ENCODE measurements at regions of chr1 and their contacts with region 1.

Region 1: DNA sequence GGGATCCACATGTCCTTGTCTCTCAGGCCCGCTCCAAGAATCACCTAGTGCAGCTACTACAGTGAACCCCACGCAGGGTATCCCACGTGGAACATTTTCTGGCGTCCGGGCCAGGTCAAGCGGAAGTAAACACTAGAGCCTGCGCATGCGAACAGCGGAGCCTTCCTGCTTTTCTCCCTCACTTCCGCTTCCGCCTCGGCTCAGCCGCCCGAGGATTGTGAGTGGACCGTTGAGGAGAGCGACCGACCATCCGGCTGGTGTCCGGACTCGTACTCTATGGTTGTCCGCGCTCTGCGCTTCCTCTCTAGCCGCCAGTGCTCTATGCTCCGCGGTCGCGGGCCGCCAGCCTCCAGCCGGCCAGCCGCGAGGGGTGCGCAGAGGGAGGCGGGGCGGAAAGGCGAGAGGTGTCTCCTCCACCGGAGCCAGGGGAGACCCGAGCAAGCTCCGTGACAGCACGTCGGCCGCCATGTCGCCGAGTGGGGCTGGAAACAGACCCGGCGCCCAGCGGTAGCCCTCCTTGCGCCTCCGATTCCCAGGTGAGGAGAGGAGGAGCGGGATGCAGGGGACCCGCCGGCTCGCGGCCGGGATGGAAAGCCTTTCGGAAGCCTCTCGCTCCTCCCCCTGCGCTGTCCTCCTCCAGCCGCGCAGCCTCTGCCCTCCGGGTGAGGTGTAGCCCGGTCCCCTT is at the starts of genes CNST and TFB2M:
- DNase-seq: peak; percentile 96
- H3K4me3 Mint-ChIP-seq: peak within 1 kb of the TSS; percentile 96
- H3K27ac Mint-ChIP-seq: peak within 1 kb of the TSS; percentile 94
- H3K4me1 Mint-ChIP-seq: peaks cover 43% of the 10 kb centered on the region
- H3K27me3 Mint-ChIP-seq: no peaks in the 10 kb centered on the region
- total RNA-seq, gene CNST: 22.1 to 25.3 TPM
- total RNA-seq, gene TFB2M: 10.8 to 11.1 TPM

Region 2: DNA sequence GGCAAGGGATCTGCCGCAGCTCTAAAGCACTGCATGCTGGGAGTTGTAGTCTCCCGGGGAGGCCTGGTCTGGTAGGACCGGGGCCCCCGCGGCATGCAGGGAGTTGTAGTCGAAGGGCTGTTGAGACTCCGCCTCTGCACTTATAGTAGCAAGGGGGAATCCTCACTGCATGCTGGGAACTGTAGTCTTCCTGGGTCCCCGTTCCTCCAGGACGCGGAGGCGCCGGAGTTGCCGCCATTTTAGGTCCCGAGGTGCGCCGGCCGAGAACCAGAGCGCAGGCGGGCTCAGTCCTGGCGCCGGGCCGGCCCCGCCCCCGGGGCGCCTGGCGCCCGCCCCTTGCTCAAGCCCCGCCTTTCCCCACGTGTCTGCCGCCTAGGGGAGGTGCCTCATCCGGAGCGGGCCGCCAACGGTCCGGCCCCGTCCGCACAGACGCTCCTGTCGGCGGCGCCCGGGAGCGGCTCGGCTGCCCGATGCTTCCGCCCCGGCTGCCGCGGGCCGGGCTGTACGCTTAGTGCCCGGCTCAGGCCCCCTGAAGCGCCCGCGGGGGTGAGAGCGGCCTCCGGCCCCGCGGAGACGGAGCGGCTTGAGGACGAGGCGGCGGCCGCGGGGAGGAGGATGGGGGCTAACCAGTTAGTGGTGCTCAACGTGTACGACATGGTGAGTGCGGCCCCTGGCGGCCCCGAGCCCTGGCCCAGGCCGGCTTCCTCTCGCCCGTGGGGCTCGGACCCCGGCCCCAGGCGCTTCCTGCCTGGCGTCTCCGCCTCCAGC is 1913.4 kb before region 1 on chr1 and contains the start of gene DESI2:
- CTCF ChIA-PET with region 1: no interaction called
- intact Hi-C with region 1: loop called (anchors 10 kb)
- DNase-seq: peak; percentile 99
- H3K4me3 Mint-ChIP-seq: peak within 1 kb of the TSS; percentile 82
- H3K27ac Mint-ChIP-seq: peak within 1 kb of the TSS; percentile 88
- H3K4me1 Mint-ChIP-seq: peaks cover 18% of the 10 kb centered on the region
- H3K27me3 Mint-ChIP-seq: no peaks in the 10 kb centered on the region
- total RNA-seq, gene DESI2: 31.7 to 32.5 TPM

Region 3: GRCh38 chr1:245156081-245156735 is 1410.1 kb before region 1 on chr1:
- CTCF ChIA-PET with region 1: no interaction called
- intact Hi-C with region 1: loop called (anchors 1 kb)
- DNase-seq: peak; percentile 89
- H3K4me3 Mint-ChIP-seq: peak overlapping the region; percentile 71
- H3K27ac Mint-ChIP-seq: no peak overlapping the region
- H3K4me1 Mint-ChIP-seq: peaks cover 17% of the 10 kb centered on the region
- H3K27me3 Mint-ChIP-seq: peaks cover 61% of the 10 kb centered on the region

Region 4: GRCh38 chr1:246513619-246514343 is 52.5 kb before region 1 on chr1:
- CTCF ChIA-PET with region 1: no interaction called
- intact Hi-C with region 1: loop called (anchors 1 kb)
- DNase-seq: no peak
- H3K4me3 Mint-ChIP-seq: no peak overlapping the region
- H3K27ac Mint-ChIP-seq: no peak overlapping the region
- H3K4me1 Mint-ChIP-seq: peaks cover 6% of the 10 kb centered on the region
- H3K27me3 Mint-ChIP-seq: no peaks in the 10 kb centered on the region

Region 5: DNA sequence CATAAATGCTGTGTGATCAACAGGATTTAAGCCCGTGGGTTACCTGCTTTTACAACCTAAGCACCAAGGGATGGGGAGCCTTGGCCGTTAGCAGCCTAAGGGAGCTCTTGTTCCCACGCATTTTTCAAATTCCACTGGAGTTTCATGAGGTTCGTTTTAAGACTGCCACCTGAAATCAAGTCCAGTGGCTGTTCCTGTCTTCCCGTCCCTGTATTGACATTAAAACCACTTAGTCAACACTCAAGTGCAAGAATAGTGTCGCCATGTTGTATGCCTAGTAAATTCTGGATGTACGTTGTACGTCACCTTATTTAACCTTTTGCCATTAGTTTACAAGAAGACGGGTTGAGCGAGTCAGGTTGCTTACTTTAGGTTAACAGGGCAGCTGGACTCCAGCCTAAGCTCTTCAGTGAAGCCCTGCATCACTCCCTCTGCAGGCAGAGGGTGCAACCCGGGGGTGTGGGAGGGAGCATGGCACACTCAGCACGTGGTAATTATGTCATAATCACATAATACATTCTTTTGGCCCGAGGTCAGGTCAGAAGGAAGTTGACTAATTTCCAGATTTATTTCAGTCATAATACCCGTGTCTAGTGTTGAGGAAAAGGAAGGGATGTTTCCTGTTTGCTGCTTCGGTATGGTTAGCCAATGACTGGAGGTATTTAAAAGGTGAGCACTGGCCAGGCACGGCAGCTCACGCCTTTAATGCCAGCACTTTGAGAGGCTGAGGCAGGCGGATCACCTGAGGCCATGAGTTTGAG is 42.5 kb after region 1 on chr1:
- CTCF ChIA-PET with region 1: interaction called, 5 read pairs
- intact Hi-C with region 1: loop called (anchors 1 kb)
- DNase-seq: peak; percentile 49
- H3K4me3 Mint-ChIP-seq: no peak overlapping the region
- H3K27ac Mint-ChIP-seq: peak overlapping the region; percentile 33
- H3K4me1 Mint-ChIP-seq: peaks cover 51% of the 10 kb centered on the region
- H3K27me3 Mint-ChIP-seq: no peaks in the 10 kb centered on the region

Region 6: GRCh38 chr1:246931549-246932365 is 365.5 kb after region 1 on chr1 and contains the start of gene AHCTF1:
- CTCF ChIA-PET with region 1: no interaction called
- intact Hi-C with region 1: loop called (anchors 1 kb)
- DNase-seq: peak; percentile 96
- H3K4me3 Mint-ChIP-seq: peak within 1 kb of the TSS; percentile 99
- H3K27ac Mint-ChIP-seq: peak within 1 kb of the TSS; percentile 95
- H3K4me1 Mint-ChIP-seq: peaks cover 28% of the 10 kb centered on the region
- H3K27me3 Mint-ChIP-seq: no peaks in the 10 kb centered on the region
- total RNA-seq, gene AHCTF1: 32.1 to 38.8 TPM

Region 7: DNA sequence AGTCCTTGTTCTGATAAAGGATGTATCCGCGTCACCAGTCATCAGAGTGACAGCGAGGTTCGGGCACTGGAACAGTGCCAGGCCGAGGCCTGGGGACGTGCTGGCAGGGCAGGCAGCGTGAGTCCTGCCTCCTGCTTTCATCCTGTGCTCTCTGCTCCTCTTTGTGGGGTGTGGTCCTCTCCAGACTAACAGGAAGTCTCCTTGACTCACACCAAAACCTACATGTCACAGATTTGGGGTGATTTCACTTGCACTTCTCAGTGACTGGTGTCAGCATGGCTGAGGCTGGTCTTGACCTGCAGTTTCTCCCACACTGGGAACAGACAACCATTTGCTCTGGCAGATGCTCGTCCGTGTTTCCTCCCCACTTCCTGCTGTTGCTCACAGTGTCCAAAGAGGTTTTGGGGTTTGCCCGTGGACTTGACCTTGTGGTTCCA is 840.9 kb after region 1 on chr1:
- CTCF ChIA-PET with region 1: no interaction called
- intact Hi-C with region 1: loop called (anchors 5 kb)
- DNase-seq: peak; percentile 73
- H3K4me3 Mint-ChIP-seq: no peak overlapping the region
- H3K27ac Mint-ChIP-seq: no peak overlapping the region
- H3K4me1 Mint-ChIP-seq: peaks cover 42% of the 10 kb centered on the region
- H3K27me3 Mint-ChIP-seq: peaks cover 3% of the 10 kb centered on the region

Measured in activated naive CD4-positive, alpha-beta T cell treated with anti-CD3 and anti-CD28 coated beads for 36 hours (primary cell).